ENCODE measurements at regions of chr17 and their contacts with region 1.

Region 1: GRCh38 chr17:76623271-76624146 is 20.0 kb downstream of the ST6GALNAC1 start:
- DNase-seq: peak; percentile 23
- H3K4me3 ChIP-seq: no peak overlapping the region
- H3K27ac ChIP-seq: peak overlapping the region; percentile 34
- H3K27me3 ChIP-seq: peaks cover 13% of the 10 kb centered on the region
- CTCF ChIP-seq: peak; percentile 94

Region 2: GRCh38 chr17:76458580-76459490 is 164.7 kb before region 1 on chr17:
- CTCF ChIA-PET with region 1: interaction called, 10 read pairs
- POLR2A ChIA-PET with region 1: no interaction called
- DNase-seq: no peak
- H3K4me3 ChIP-seq: no peak overlapping the region
- H3K27ac ChIP-seq: no peak overlapping the region
- H3K27me3 ChIP-seq: no peaks in the 10 kb centered on the region
- CTCF ChIP-seq: peak; percentile 82

Region 3: DNA sequence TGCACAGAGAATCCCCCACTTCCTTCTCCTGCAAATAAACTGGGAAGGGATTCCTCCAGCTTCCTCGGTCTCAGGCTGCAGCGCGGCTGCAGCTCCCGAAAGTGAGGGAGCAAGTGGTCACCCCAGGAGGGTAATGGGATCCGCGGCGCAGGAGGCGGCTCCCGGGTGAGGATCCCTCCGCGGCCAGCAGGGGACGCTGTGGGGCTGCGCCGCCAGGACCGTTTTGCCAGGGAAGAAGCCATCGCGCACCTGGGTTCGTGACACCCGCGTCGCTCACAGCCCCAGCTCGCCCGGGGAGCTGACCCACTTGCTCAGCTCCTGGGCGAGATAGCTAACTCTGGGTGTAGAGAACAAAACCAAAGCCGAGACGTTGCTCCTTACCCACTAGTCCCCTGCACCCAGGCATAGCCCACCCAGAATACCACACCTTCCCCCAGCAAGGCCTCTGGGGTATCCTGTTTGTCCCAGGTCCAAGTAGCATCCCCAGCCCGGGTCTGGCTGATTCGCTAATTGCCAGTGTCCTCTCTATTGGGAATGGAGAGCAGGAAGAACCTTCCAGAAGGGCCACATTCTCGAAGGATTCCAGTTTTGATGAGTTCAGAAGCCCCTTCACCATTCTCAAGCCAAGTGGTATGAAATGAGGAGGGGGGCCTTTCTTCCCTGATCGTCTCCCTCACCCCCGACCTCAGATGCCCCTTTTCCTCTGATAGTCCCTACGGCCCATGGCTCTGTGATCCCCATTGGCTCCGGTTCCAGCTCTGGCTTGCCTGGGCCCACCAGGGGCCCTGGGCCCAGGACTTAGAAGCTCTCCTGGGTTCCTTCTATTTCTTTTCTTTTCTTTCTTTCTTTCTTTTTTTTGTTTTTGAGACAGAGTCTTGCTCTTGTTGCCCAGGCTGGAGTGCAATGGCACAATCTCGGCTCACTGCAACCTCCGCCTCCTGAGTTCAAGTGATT is 100.1 kb before region 1 on chr17:
- CTCF ChIA-PET with region 1: interaction called, 46 read pairs
- POLR2A ChIA-PET with region 1: no interaction called
- DNase-seq: no peak
- H3K4me3 ChIP-seq: no peak overlapping the region
- H3K27ac ChIP-seq: no peak overlapping the region
- H3K27me3 ChIP-seq: no peaks in the 10 kb centered on the region
- CTCF ChIP-seq: peak; percentile 99

Region 4: GRCh38 chr17:76578344-76578979 is 45.0 kb before region 1 on chr17:
- CTCF ChIA-PET with region 1: interaction called, 12 read pairs
- POLR2A ChIA-PET with region 1: no interaction called
- DNase-seq: no peak
- H3K4me3 ChIP-seq: no peak overlapping the region
- H3K27ac ChIP-seq: no peak overlapping the region
- H3K27me3 ChIP-seq: peaks cover 3% of the 10 kb centered on the region
- CTCF ChIP-seq: no peak

Region 5: DNA sequence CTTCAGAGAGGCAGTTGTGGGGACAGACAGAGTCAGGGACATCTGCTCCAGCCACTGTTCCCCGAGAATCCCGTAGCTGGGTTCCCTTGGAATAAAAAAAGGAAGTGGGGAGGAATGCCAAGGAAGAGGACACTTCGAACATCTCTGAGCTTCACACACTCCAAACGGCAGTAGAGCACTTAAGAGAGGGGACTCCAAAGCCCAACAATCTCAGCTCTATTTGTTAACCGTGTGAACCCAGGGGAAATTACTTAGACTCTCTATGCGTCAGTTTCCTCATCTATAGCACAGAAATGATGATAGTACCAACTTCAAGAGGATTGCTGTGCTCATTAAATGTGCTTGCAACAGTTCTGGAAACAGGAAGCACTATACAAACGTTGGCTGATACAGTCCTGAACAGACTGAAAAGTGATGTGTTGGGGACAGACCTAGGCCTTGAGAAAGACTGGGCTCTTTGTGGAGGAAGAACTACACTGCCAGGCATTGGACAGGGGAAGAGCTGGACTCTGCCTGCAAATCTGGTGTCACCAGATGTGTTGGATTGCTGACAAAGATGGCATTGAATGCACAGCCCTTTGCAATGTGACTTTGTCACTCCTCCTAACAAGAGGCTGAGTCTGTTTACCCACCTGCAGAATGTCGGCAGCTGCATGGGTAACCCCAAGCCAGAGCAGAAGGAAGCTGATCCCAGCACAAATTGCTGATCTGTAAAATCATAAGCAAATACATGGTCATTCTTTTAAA is 25.6 kb before region 1 on chr17:
- CTCF ChIA-PET with region 1: interaction called, 24 read pairs
- POLR2A ChIA-PET with region 1: no interaction called
- DNase-seq: no peak
- H3K4me3 ChIP-seq: no peak overlapping the region
- H3K27ac ChIP-seq: no peak overlapping the region
- H3K27me3 ChIP-seq: no peaks in the 10 kb centered on the region
- CTCF ChIP-seq: no peak

Region 6: DNA sequence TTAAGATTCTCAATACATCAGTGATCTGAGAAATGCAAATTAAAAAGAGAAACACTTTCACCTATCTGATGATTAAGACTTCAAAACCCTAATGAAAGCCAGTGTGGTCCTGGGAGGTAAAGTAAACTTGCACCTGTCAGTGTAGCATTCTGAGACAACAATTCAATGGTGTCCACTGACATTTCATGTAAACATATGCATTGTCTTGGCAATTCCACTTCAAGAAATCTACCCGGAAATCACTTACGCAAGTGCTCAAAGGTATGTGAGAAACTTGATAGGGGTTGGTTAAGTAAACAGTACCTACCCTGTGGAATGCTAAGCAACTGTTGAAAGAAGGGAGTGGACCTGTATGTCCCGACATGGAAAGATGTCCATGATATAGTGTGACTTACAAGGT is 18.0 kb after region 1 on chr17:
- CTCF ChIA-PET with region 1: interaction called, 14 read pairs
- POLR2A ChIA-PET with region 1: no interaction called
- DNase-seq: no peak
- H3K4me3 ChIP-seq: no peak overlapping the region
- H3K27ac ChIP-seq: no peak overlapping the region
- H3K27me3 ChIP-seq: peaks cover 11% of the 10 kb centered on the region
- CTCF ChIP-seq: no peak

Region 7: GRCh38 chr17:76714822-76715495 is 91.5 kb after region 1 on chr17:
- CTCF ChIA-PET with region 1: interaction called, 12 read pairs
- POLR2A ChIA-PET with region 1: no interaction called
- DNase-seq: no peak
- H3K4me3 ChIP-seq: no peak overlapping the region
- H3K27ac ChIP-seq: peak overlapping the region; percentile 98
- H3K27me3 ChIP-seq: no peaks in the 10 kb centered on the region
- CTCF ChIP-seq: peak; percentile 83

Region 8: GRCh38 chr17:76726231-76726775 is 102.8 kb after region 1 on chr17 and contains the start of gene JMJD6:
- CTCF ChIA-PET with region 1: no interaction called
- POLR2A ChIA-PET with region 1: no interaction called
- DNase-seq: peak; percentile 89
- H3K4me3 ChIP-seq: peak within 1 kb of the TSS; percentile 93
- H3K27ac ChIP-seq: peak within 1 kb of the TSS; percentile 94
- H3K27me3 ChIP-seq: no peaks in the 10 kb centered on the region
- CTCF ChIP-seq: no peak
- polyA plus RNA-seq, gene JMJD6: 12.4 and 17.3 TPM in 2 replicates